ENCODE measurements at regions of chr7 and their contacts with region 1.

Region 1: GRCh38 chr7:38335492-38336147 is 62.2 kb upstream of the TARP start:
- DNase-seq: peak; percentile 62 to 92 (median 81)
- ATAC-seq: peak; percentile 78
- H3K4me3 ChIP-seq: peak overlapping the region; percentile 14 to 52
- H3K4me3 Mint-ChIP-seq: peak overlapping the region; percentile 80
- H3K27ac ChIP-seq: peak overlapping the region; percentile 20 to 70
- H3K27ac Mint-ChIP-seq: peak overlapping the region; percentile 89
- H3K4me1 ChIP-seq: peaks cover 26% of the 10 kb centered on the region
- H3K4me1 Mint-ChIP-seq: peaks cover 50% of the 10 kb centered on the region
- H3K27me3 ChIP-seq: no peaks in the 10 kb centered on the region
- H3K27me3 Mint-ChIP-seq: no peaks in the 10 kb centered on the region
- CTCF ChIP-seq: peak; percentile 82

Region 2: DNA sequence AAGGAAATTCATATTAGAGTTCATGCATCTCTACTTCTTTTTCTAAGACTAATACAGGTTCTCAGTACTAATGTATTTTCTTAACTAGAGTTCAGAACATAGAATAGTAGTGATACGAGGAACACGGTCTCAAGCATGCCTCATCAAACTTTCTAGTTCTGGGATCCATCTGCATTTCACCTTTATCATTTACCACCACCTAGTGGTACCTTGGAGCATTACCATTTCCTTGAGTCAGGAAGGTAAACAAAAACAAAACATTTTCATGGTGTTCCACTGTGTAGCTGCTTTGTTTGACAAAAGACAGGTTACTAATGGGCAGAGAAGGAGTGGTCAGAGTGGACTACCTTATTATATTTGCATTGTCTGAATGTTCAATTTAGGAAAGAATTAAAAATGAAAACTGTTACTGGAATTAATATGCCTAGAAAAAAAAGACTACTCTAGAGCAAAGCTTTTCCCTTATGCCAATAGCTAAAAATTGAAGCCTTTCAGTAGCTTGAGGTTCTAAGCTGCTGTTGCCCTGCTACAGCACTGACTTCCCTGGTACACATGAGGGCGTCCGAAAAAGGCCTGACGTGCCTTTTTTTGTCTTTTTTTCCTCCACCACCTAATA is 113.0 kb before region 1 on chr7:
- CTCF ChIA-PET with region 1: interaction called, 131 read pairs
- POLR2A ChIA-PET with region 1: interaction called, 22 read pairs
- intact Hi-C with region 1: loop called in 1 of 2 experiments (anchors 1 kb)
- DNase-seq: peak in 3 of 9 experiments; percentile 43 to 87 (median 80)
- ATAC-seq: peak; percentile 65
- H3K4me3 ChIP-seq: no peak overlapping the region
- H3K4me3 Mint-ChIP-seq: no peak overlapping the region
- H3K27ac ChIP-seq: peak overlapping the region in 1 of 2 experiments; percentile 85
- H3K27ac Mint-ChIP-seq: peak overlapping the region; percentile 72
- H3K4me1 ChIP-seq: peaks cover 29% of the 10 kb centered on the region
- H3K4me1 Mint-ChIP-seq: peaks cover 56% of the 10 kb centered on the region
- H3K27me3 ChIP-seq: no peaks in the 10 kb centered on the region
- H3K27me3 Mint-ChIP-seq: no peaks in the 10 kb centered on the region
- CTCF ChIP-seq: peak; percentile 79

Region 3: DNA sequence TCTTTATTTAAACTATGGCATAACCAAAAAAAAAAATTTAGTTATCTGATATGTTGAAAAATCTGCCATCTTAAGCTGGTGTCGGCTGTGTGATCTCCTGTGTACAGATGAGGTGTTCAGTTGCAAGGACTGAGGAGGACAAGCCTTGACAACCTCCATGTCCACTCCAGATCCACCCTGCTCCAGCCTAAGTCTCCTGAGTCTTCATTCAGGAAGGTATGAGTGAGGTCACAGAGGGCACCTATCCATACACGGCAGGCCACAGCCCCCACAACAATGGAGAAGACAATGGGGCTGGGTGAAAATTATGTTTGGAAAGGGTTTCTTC is 78.3 kb before region 1 on chr7:
- CTCF ChIA-PET with region 1: no interaction called
- POLR2A ChIA-PET with region 1: interaction called, 4 read pairs
- intact Hi-C with region 1: loop called in 1 of 2 experiments (anchors 1 kb)
- DNase-seq: no peak
- ATAC-seq: no peak
- H3K4me3 ChIP-seq: no peak overlapping the region
- H3K4me3 Mint-ChIP-seq: no peak overlapping the region
- H3K27ac ChIP-seq: no peak overlapping the region
- H3K27ac Mint-ChIP-seq: peak overlapping the region; percentile 41
- H3K4me1 ChIP-seq: no peaks in the 10 kb centered on the region
- H3K4me1 Mint-ChIP-seq: peaks cover 7% of the 10 kb centered on the region
- H3K27me3 ChIP-seq: no peaks in the 10 kb centered on the region
- H3K27me3 Mint-ChIP-seq: no peaks in the 10 kb centered on the region
- CTCF ChIP-seq: no peak

Region 4: GRCh38 chr7:38351601-38352000 is 16.0 kb after region 1 on chr7:
- CTCF ChIA-PET with region 1: interaction called, 29 read pairs
- POLR2A ChIA-PET with region 1: interaction called, 4 read pairs
- intact Hi-C with region 1: no loop called
- DNase-seq: no peak
- ATAC-seq: no peak
- H3K4me3 ChIP-seq: peak overlapping the region in 1 of 2 experiments; percentile 36
- H3K4me3 Mint-ChIP-seq: peak overlapping the region; percentile 89
- H3K27ac ChIP-seq: peak overlapping the region in 1 of 2 experiments; percentile 4
- H3K27ac Mint-ChIP-seq: peak overlapping the region; percentile 95
- H3K4me1 ChIP-seq: peaks cover 5% of the 10 kb centered on the region
- H3K4me1 Mint-ChIP-seq: peaks cover 62% of the 10 kb centered on the region
- H3K27me3 ChIP-seq: no peaks in the 10 kb centered on the region
- H3K27me3 Mint-ChIP-seq: no peaks in the 10 kb centered on the region
- CTCF ChIP-seq: no peak